Dendritic cell treated with granulocyte-macrophage colony-stimulating factor and Interleukin-4, amounts not matched to agents 40 ng/mL and 50 ng/mL, for 4 days (primary cell): ENCODE measurements at regions of chr17 and their contacts with region 1.

Region 1: DNA sequence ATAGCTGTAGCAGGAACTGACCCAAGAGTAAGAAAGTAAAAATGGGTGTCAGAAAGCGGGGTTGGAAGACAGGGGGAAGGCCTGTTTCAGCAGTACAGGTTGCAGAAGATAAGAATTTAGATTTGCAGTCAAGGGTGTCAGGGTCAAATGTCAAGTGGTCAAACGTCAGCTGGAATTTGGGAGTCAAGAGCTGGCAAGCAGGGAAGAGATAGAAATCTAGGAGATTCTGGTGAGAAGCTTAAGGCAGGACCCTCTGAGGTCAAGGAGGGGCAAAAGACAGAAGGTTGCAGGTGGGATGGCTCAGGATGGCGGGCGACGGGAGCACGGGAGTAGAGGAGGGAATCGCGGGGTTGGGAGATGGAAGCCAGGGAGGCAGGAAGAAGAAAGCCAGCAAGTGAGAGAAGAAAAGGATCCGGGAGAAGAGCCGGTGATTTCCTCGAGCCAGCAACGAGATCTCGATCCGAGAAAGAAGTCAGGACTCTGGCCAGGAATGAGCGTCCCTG is 335 bp downstream of the SLC25A35 start:
- H3K4me3 Mint-ChIP-seq: peak overlapping the region; percentile 88
- H3K27ac Mint-ChIP-seq: peak overlapping the region; percentile 90
- H3K4me1 Mint-ChIP-seq: peaks cover 66% of the 10 kb centered on the region
- H3K27me3 Mint-ChIP-seq: no peaks in the 10 kb centered on the region

Region 2: DNA sequence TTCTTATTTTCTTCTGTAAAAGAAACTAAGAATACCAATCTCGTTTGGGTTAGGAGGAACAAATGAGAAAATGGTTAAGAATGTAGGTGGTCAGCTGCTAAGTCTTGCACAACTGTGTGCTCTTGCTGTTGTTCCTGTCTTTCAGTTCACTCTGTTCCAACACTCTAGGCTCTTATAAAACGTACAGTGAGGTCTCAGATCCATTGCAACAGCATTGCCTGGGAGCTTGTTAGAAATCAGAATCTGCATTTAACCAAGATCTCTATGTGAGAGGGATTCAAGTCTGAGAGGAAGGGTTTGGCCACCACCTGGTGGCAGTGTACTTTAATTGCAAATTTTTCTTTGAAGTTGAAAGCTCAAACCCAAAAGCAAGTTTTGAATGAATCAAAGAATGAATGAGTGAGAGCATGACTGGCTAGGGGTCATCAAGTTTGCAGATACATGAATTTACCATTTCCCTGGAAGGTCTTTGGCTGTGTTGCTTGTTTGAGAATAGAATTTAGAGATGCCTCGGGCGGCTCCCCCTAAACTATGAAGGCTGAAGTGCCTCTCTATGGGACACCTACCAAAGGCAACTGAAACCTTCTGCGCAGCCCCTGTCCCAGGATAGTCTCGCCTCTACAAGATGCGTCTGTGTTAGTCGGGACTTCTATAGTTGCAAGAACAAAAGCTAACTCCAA is 253.5 kb before region 1 on chr17:
- intact Hi-C with region 1: no loop called
- H3K4me3 Mint-ChIP-seq: no peak overlapping the region
- H3K27ac Mint-ChIP-seq: no peak overlapping the region
- H3K4me1 Mint-ChIP-seq: peaks cover 66% of the 10 kb centered on the region
- H3K27me3 Mint-ChIP-seq: peaks cover 21% of the 10 kb centered on the region

Region 3: GRCh38 chr17:8222630-8223356 is 72.1 kb before region 1 on chr17:
- intact Hi-C with region 1: loop called (anchors 1 kb)
- H3K4me3 Mint-ChIP-seq: peak overlapping the region; percentile 89
- H3K27ac Mint-ChIP-seq: peak overlapping the region; percentile 99
- H3K4me1 Mint-ChIP-seq: peaks cover 63% of the 10 kb centered on the region
- H3K27me3 Mint-ChIP-seq: no peaks in the 10 kb centered on the region